Gastrocnemius medialis (tissue), 4 donors: ENCODE measurements at regions of chr4 and their contacts with region 1.

Region 1: DNA sequence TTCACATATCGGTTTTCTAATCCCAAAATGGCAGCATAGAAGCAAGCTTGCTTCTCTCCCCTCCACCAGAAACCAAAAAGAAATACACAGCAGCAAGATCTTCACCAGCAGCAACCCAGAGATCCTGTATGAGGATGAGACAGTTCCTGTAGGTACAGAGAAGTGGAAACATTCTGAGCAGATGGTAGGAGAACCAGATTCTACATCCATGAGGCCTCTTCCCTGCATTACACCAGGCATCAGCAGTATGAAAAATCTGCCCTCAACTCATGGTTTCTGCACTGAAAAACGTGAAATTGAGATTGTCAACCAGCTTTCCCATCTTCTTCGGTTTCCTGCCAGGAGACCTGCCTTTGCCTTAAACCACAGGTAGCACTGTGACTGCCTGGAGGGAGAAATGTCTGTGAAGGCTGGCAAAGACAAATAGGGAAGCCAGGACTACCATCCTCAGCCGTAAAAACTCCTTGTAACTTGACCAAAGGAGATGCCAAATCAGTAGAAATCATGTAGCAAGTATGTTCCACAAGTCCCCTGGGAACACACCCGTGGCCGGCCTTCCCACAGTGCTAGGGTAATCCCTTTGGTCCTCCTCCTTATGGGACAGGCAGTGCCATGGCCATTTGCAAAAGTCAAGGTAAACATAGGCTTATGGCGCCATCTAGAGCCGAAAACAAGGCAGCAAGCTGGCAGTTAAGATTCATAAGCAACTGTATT is 24.0 kb upstream of the MTHFD2L start:
- DNase-seq: peak; percentile 32 to 48
- ATAC-seq: peak; percentile 73 to 76
- H3K4me3 ChIP-seq: no peak overlapping the region
- H3K27ac ChIP-seq: no peak overlapping the region
- H3K4me1 ChIP-seq: no peaks in the 10 kb centered on the region
- H3K27me3 ChIP-seq: no peaks in the 10 kb centered on the region
- CTCF ChIP-seq: peak; percentile 29 to 77 (median 63)
- POLR2A ChIP-seq: no peak

Region 2: DNA sequence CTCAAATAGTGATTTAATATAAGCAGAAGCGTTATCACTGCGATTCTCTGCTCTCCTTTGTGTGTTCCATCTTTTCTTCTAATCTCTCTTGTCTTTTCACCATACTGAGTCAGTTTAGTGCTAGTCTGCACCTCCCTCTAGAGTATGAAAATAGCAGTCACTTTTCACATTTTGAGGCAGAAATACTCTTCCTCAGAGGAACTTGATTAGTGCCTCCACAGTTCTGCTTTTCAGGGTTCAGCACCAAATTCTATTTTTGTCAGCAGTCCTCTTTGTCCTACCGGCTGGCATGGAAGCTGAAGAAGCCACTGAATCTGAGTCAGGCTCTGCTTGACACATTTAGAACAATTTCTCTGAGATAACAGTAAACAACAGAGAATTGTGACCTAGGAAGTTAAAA is 825.7 kb before region 1 on chr4:
- in situ Hi-C with region 1: loop called in 1 of 4 experiments (anchors 25 kb)
- intact Hi-C with region 1: no loop called
- DNase-seq: no peak
- ATAC-seq: no peak
- H3K4me3 ChIP-seq: no peak overlapping the region
- H3K27ac ChIP-seq: no peak overlapping the region
- H3K4me1 ChIP-seq: no peaks in the 10 kb centered on the region
- H3K27me3 ChIP-seq: no peaks in the 10 kb centered on the region
- CTCF ChIP-seq: peak in 1 of 5 experiments; percentile 7
- POLR2A ChIP-seq: no peak

Region 3: DNA sequence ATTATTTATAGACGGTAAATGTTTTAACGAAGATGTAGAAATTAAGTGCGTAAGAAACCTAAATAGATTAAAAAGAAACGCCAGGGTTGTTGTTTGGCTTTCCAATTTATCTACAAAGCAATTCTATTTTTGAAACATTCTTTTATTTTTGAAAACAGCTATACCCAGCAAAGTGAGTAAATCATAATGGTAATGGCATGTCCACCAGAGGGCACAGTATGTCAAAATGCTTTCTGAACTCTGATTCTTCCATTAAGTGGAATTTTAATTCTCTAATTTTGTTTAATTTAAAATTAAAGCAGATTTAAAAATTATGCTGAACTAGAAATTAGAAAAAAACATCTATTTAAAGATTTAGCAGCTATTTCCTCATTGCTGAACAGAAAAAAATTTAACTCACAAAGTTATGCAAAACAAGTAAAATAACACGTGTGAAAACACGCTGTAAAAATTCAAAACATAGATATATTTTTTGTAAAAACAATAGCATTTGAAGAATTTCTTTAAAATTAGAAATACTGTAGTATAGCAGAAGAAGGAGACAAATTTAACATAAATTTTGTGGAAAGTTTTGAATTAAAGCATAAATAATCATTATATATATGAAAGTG is 540.2 kb before region 1 on chr4:
- in situ Hi-C with region 1: no loop called
- intact Hi-C with region 1: loop called (anchors 10 kb)
- DNase-seq: no peak
- ATAC-seq: no peak
- H3K4me3 ChIP-seq: no peak overlapping the region
- H3K27ac ChIP-seq: no peak overlapping the region
- H3K4me1 ChIP-seq: no peaks in the 10 kb centered on the region
- H3K27me3 ChIP-seq: no peaks in the 10 kb centered on the region
- CTCF ChIP-seq: peak in 2 of 5 experiments; percentile 17 to 30
- POLR2A ChIP-seq: no peak

Region 4: DNA sequence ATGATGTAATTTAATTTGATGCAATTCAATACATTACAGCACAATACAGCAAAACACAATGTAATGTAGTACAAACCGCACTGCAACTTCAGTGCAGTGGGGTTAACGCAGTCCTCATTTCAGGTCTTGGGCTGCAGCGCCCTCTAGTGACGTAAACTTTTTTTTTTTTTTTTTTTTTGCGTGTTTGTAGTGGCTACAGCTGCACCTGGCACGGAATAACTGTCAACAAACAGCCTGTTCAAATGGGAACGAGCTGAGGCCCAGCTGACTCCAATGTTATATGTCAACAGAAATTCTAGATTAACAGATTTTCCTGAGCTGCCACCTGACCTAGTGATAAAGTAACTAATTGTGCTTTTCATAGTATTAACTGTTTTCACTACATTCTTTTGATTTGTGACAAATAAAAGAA is 480.2 kb before region 1 on chr4:
- in situ Hi-C with region 1: loop called in 3 of 4 experiments (anchors 10 to 25 kb)
- intact Hi-C with region 1: no loop called
- DNase-seq: peak in 1 of 2 donors; percentile 13
- ATAC-seq: peak; percentile 46 to 62
- H3K4me3 ChIP-seq: no peak overlapping the region
- H3K27ac ChIP-seq: no peak overlapping the region
- H3K4me1 ChIP-seq: no peaks in the 10 kb centered on the region
- H3K27me3 ChIP-seq: no peaks in the 10 kb centered on the region
- CTCF ChIP-seq: peak in 4 of 5 experiments; percentile 30 to 64 (median 52)
- POLR2A ChIP-seq: no peak

Region 5: DNA sequence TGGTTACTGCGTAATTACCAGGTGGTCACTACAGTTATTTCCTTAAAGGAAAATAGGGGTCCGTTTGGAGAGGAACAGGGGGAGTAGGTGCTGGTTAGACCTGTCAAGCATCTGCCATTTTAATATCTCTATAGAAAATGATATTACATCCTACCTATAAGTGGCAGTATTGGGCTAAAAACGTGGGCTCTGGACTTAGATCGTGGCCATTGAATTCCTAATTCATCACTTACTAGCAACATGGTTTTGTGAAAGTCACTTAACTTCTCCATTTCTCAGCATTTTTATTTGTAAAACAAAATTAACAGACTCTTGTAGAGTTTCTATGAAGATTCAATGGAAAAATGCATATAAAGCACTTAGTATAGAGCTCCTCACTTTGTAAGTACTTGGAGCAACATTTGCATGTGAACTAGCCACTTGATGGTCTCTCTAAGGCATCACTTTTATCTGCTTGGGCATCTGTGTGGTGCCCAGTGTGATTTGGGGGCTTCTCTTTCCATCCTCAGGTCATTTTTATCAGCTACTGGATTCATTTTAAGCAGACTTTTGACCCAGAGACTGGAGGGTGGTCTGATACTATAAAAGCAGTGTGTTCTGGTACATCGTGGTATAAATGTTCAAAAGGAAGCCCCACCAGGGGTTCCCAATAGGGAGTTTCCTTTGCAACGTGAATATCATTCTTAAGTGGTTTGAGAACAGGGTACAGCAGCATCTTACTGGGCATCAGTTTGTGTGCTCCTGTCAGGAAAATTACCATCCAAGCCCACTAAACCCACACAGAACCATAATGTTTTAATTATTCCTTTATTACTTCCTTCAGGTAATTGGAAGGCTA is 471.0 kb before region 1 on chr4:
- in situ Hi-C with region 1: loop called (anchors 10 to 25 kb)
- intact Hi-C with region 1: loop called (anchors 5 kb)
- DNase-seq: no peak
- ATAC-seq: peak in 1 of 2 donors; percentile 52
- H3K4me3 ChIP-seq: no peak overlapping the region
- H3K27ac ChIP-seq: no peak overlapping the region
- H3K4me1 ChIP-seq: no peaks in the 10 kb centered on the region
- H3K27me3 ChIP-seq: no peaks in the 10 kb centered on the region
- CTCF ChIP-seq: peak; percentile 16 to 49 (median 32)
- POLR2A ChIP-seq: no peak

Region 6: DNA sequence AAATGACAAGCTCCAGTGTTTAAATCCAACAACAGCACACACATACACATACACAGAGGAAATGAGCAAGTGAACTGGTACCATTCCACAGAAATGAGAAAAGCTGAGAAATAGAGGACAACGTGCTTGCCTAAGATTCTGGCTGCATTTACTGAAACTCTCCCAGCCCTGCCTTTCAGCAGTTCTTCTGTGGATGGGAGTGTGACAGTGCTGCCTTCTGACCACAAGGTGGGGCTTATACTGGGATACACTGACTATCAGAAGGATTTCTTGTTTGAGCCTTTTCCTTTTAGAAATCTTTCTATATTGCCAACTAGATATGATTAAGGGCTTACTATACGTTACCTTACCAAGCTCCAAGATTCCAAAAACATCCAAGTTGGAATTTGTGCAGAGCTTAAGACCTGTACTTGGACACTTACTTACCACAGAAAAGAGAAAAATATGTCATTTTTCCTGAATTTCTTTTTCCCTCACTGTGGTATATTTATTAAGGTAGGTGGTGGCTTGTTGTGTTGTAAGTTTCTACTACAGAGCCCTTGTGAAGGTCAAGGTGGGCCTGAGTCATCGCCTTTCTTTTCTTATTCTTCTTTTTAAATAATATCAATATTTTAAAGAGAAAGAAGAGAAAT is 404.3 kb before region 1 on chr4:
- in situ Hi-C with region 1: no loop called
- intact Hi-C with region 1: loop called (anchors 10 kb)
- DNase-seq: peak; percentile 45 to 67
- ATAC-seq: peak; percentile 74 to 84
- H3K4me3 ChIP-seq: no peak overlapping the region
- H3K27ac ChIP-seq: no peak overlapping the region
- H3K4me1 ChIP-seq: peaks cover 0 to 9% of the 10 kb centered on the region in 2 donors
- H3K27me3 ChIP-seq: no peaks in the 10 kb centered on the region
- CTCF ChIP-seq: peak in 4 of 5 experiments; percentile 28 to 66 (median 58)
- POLR2A ChIP-seq: no peak